ENCODE measurements at regions of chr2 and their contacts with region 1.

Region 1: GRCh38 chr2:7625392-7626138 is 708.4 kb downstream of the RNF144A start:
- DNase-seq: no peak
- ATAC-seq: no peak
- H3K4me3 ChIP-seq: no peak overlapping the region
- H3K27ac ChIP-seq: no peak overlapping the region
- H3K4me1 ChIP-seq: no peaks in the 10 kb centered on the region
- H3K27me3 ChIP-seq: no peaks in the 10 kb centered on the region
- CTCF ChIP-seq: no peak
- POLR2A ChIP-seq: no peak
- RAD21 ChIP-seq: no peak

Region 2: DNA sequence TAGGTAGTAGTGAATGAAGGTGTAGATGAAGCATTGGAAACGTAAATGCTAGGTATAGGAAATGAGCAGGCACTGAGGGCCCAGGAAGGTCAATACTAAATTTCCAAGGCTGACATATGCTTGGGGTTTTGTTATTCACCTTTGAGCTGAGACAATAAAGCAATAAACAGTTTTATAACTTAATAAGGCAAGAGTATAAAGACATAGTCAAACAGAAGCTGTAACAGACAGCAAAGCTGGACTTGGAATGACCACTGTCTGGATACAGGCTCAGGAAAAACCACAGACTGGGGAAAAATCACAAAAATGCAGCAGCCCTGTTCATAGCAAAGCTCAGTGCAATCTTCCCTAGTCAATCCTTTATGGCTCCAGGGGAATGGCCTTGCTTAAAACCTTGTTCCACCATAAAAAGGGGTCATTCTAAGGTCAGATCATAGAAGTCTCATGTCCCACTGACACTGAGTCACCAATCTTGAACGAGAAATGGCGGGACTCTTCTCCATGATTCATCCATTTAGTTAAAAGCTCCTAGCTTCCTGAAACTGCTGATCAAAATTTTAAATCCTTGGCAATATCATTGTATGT is 1253.2 kb before region 1 on chr2:
- CTCF ChIA-PET with region 1: no interaction called
- POLR2A ChIA-PET with region 1: no interaction called
- RAD21 ChIA-PET with region 1: no interaction called
- intact Hi-C with region 1: no loop called
- DNase-seq: no peak
- ATAC-seq: 0 out of 2 replicates have a peak, but pooled peaks have one; percentile 17
- H3K4me3 ChIP-seq: no peak overlapping the region
- H3K27ac ChIP-seq: no peak overlapping the region
- H3K4me1 ChIP-seq: peaks cover 0 to 4% of the 10 kb centered on the region in 2 experiments; a peak in 1 of 4 replicates
- H3K27me3 ChIP-seq: no peaks in the 10 kb centered on the region
- CTCF ChIP-seq: no peak
- POLR2A ChIP-seq: no peak
- RAD21 ChIP-seq: no peak

Region 3: DNA sequence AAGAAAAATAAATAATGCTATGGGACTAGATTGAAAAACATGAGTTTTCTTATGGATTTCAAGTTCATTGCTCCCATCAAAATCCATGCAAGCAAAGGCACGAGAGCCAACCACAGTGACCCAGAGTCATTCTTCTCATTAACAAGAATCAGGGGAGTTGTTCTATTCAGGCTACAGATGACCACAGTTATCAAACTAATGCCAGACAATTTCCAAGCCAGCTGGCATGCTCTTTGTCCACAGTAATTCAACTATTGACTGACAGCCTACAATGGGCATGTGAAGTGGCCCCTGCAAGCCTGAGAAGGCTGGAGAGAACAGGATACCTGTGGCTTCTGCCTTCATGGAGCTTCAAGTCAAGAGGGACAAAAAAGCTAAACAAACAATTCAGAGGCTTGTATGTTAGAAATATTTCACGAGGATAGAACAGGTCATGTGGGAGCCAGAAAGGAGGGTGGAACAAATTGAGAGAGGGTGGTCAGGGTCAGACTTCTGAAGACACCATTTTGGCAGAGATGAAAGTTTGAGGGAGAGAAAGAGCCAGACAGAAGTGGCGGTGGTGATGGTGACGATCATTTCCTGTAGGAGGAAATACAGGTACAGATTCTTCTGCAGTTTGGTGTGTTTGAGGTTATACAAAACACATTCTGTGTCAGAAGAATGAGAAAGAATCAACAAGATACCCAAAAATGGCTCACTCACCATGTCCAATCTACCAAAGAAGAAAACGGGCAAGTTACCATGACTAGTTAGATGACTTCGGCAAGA is 24.1 kb after region 1 on chr2:
- CTCF ChIA-PET with region 1: no interaction called
- POLR2A ChIA-PET with region 1: no interaction called
- RAD21 ChIA-PET with region 1: no interaction called
- intact Hi-C with region 1: loop called (anchors 2 kb)
- DNase-seq: no peak
- ATAC-seq: no peak
- H3K4me3 ChIP-seq: no peak overlapping the region
- H3K27ac ChIP-seq: no peak overlapping the region
- H3K4me1 ChIP-seq: no peaks in the 10 kb centered on the region
- H3K27me3 ChIP-seq: no peaks in the 10 kb centered on the region
- CTCF ChIP-seq: no peak
- POLR2A ChIP-seq: no peak
- RAD21 ChIP-seq: no peak